Caco-2 (cell line): ENCODE measurements at regions of chr2 and their contacts with region 1.

Region 1: DNA sequence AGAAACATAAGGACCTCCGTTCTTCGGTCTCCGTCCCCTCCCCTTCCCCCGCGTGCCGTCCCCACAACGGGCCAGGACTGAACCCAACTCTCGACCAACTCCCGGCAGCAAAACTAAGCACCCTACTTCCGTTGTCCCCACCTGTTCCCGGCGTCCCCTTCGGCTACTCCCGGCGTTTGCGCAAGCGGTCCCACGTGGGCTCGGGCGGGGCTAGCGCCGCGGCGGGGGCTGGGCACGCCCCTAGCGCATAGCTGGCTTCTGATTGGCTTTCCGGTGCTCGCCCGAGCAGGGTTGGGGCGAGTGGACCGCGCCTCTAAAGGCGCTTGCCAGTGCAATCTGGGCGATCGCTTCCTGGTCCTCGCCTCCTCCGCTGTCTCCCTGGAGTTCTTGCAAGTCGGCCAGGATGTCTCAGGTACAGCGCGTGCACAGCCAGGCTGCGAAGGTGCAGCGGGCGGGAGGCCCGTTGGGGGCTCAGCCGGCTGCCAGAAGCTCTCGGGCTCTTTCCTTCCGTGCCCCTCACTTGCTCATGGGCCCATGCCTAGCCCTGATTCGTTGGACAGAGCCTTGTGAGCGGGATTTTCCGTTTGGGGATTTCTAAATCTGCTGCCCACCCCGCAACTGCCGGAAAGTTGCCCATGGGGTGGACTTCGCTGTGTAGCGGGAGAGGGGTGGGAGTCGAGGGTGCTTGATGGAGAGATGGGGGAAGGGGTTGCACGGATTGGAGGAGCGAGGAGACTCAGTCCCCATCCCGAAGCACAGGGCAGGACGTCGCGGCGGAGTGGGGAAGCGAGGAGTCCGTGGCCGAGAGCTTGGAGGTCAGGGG is at the starts of genes C2orf76 and DBI:
- DNase-seq: peak; percentile 96 to 97
- H3K4me3 ChIP-seq: peak within 1 kb of the TSS; percentile 89
- H3K4me3 Mint-ChIP-seq: peak within 1 kb of the TSS; percentile 99
- H3K27ac Mint-ChIP-seq: peak within 1 kb of the TSS; percentile 37
- H3K4me1 ChIP-seq: peaks cover 5% of the 10 kb centered on the region; the same call in 1 of the 2 replicates
- H3K4me1 Mint-ChIP-seq: peaks cover 12% of the 10 kb centered on the region
- H3K27me3 ChIP-seq: no peaks in the 10 kb centered on the region
- H3K27me3 Mint-ChIP-seq: no peaks in the 10 kb centered on the region
- CTCF ChIP-seq: no peak
- total RNA-seq, gene C2orf76: 5.0 and 6.5 TPM in 2 replicates
- total RNA-seq, gene DBI: 256 and 257 TPM in 2 replicates

Region 2: DNA sequence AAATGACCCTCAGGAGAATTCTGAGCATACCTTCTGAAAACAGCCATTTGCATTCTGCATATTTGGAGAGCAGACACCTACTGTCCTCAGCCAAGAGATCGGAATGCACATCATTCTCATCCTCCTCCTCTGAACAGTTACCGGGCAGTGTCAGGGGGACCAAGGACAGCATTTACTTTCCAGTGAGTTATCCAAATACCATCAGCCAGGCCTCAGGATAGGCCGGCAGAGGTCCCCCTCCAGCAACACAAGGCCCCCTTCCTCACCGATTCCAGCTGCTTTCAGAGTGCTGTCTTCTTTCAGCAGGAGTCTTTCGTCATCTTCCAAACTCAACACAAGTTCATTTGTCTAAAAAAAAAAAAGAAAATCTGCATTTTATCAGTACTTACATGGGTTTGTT is 55.5 kb before region 1 on chr2:
- CTCF ChIA-PET with region 1: no interaction called
- POLR2A ChIA-PET with region 1: interaction called, 3 read pairs
- intact Hi-C with region 1: loop called (anchors 2 kb)
- DNase-seq: peak in 1 of 2 experiments; percentile 33
- H3K4me3 ChIP-seq: no peak overlapping the region
- H3K4me3 Mint-ChIP-seq: no peak overlapping the region
- H3K27ac Mint-ChIP-seq: no peak overlapping the region
- H3K4me1 ChIP-seq: peaks cover 17% of the 10 kb centered on the region; the same call in 1 of the 2 replicates
- H3K4me1 Mint-ChIP-seq: peaks cover 23% of the 10 kb centered on the region
- H3K27me3 ChIP-seq: no peaks in the 10 kb centered on the region
- H3K27me3 Mint-ChIP-seq: no peaks in the 10 kb centered on the region
- CTCF ChIP-seq: peak in 1 of 2 experiments; percentile 37

Region 3: GRCh38 chr2:119431155-119431975 is 64.5 kb after region 1 on chr2 and contains the start of gene TMEM37:
- CTCF ChIA-PET with region 1: no interaction called
- POLR2A ChIA-PET with region 1: interaction called, 5 read pairs
- intact Hi-C with region 1: loop called (anchors 5 kb)
- DNase-seq: peak; percentile 87 to 90
- H3K4me3 ChIP-seq: peak within 1 kb of the TSS; percentile 63
- H3K4me3 Mint-ChIP-seq: peak within 1 kb of the TSS; percentile 78
- H3K27ac Mint-ChIP-seq: peak within 1 kb of the TSS; percentile 85
- H3K4me1 ChIP-seq: peaks cover 80% of the 10 kb centered on the region
- H3K4me1 Mint-ChIP-seq: peaks cover 53% of the 10 kb centered on the region
- H3K27me3 ChIP-seq: no peaks in the 10 kb centered on the region
- H3K27me3 Mint-ChIP-seq: no peaks in the 10 kb centered on the region
- CTCF ChIP-seq: no peak
- total RNA-seq, gene TMEM37: 13.8 and 15.8 TPM in 2 replicates